ENCODE measurements at regions of chr19 and their contacts with region 1.

Region 1: DNA sequence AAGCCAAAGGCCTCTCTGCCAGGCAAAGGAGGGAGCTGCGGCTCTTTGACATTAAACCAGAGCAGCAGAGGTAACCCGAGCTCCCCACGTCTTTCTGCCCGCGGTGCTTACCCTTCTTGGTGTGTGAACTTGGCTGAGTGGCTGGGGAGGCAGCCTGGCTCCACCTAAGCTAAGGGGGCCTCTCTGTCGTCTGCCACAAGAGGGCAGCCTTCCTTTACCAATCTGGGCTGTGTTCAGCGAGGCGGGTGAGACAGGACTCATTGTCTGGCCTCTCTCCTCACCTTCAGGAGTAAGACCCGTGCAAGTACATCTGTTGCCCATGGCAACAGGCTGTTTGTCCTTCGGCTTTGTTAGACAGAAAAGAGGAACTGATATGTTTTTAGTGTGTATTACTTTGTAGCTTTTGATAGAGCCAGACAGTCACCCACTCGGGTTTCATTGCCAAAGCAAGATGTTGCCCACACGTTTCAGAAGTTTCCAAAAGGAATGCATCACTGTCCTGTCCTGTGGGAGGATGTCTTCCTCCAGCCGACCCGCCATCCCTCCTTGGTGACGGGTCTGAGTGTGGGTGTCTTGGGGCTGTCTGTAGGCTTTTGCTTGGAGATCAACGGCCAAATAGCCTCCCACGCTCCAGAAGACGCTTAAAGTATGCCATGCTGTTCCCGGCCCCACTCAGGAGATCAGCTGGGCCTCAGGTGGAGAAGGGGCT is 4.6 kb downstream of the POP4 start:
- DNase-seq: peak; percentile 61 to 85 (median 79)
- ATAC-seq: peak; percentile 82
- H3K4me3 ChIP-seq: no peak overlapping the region
- H3K4me3 Mint-ChIP-seq: peak overlapping the region in 1 of 10 donors; percentile 10
- H3K27ac ChIP-seq: peak overlapping the region; percentile 35
- H3K27ac Mint-ChIP-seq: peak overlapping the region in 8 of 9 donors; percentile 6 to 77 (median 44)
- H3K4me1 ChIP-seq: peaks cover 14 to 16% of the 10 kb centered on the region in 2 donors
- H3K4me1 Mint-ChIP-seq: peaks cover 16 to 39% (median 29%) of the 10 kb centered on the region in 7 donors
- H3K27me3 ChIP-seq: no peaks in the 10 kb centered on the region
- H3K27me3 Mint-ChIP-seq: peaks cover 0 to 4% (median 0%) of the 10 kb centered on the region in 5 donors

Region 2: GRCh38 chr19:29587518-29587986 is 23.2 kb before region 1 on chr19:
- CTCF ChIA-PET with region 1: no interaction called
- POLR2A ChIA-PET with region 1: no interaction called
- intact Hi-C with region 1: loop called in 1 of 2 experiments (anchors 1 kb)
- DNase-seq: peak in 1 of 9 donors; percentile 69
- ATAC-seq: peak; percentile 92
- H3K4me3 ChIP-seq: no peak overlapping the region
- H3K4me3 Mint-ChIP-seq: peak overlapping the region in 1 of 10 donors; percentile 32
- H3K27ac ChIP-seq: no peak overlapping the region
- H3K27ac Mint-ChIP-seq: peak overlapping the region in 3 of 9 donors; percentile 4 to 88 (median 6)
- H3K4me1 ChIP-seq: peaks cover 0 to 9% of the 10 kb centered on the region in 2 donors
- H3K4me1 Mint-ChIP-seq: peaks cover 0 to 33% (median 0%) of the 10 kb centered on the region in 7 donors
- H3K27me3 ChIP-seq: no peaks in the 10 kb centered on the region
- H3K27me3 Mint-ChIP-seq: peaks cover 22 to 45% (median 38%) of the 10 kb centered on the region in 5 donors

Region 3: DNA sequence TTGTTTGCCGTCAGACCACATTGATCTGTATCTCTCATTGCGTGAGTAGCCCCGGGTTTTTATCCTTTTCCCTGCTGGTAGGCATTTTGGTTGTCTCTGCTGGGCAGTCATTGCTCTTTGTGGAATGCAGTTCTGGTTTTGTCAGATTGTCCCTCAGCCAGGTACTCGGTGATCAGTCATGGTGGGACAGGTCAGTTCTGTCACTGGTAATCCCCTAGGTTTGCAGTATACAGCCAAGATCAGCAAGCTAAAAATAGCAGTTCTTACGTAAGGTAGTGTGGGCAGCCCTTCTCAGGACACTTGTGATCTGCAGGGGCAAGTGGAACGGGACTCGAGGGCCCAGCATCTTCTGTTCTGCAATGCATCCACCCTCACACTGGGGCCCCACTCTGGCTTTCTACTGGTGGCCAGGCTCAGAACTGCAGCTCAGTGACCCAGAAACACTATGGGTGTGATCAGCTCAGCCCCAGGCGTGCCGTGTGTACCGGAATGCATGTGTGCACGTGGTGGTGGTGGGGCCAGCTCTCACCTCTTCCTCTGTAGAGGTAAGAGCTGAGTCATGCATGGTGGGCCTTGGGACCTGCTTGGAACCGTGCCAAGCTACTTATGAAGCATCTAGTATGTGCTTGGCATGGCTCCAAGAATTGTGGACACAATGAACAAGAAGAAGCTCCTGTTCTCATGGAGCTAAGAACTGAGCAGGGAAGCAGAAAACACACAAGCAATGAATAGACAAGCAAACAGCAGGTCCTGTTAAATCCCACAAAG is 60.9 kb after region 1 on chr19:
- CTCF ChIA-PET with region 1: interaction called, 62 read pairs
- POLR2A ChIA-PET with region 1: interaction called, 87 read pairs
- intact Hi-C with region 1: loop called (anchors 1 kb)
- DNase-seq: peak in 8 of 9 donors; percentile 65 to 83 (median 76)
- ATAC-seq: peak; percentile 72
- H3K4me3 ChIP-seq: peak overlapping the region; percentile 50
- H3K4me3 Mint-ChIP-seq: peak overlapping the region; percentile 78 to 93 (median 82)
- H3K27ac ChIP-seq: peak overlapping the region; percentile 94
- H3K27ac Mint-ChIP-seq: peak overlapping the region; percentile 90 to 100 (median 98)
- H3K4me1 ChIP-seq: peaks cover 95 to 96% of the 10 kb centered on the region in 2 donors
- H3K4me1 Mint-ChIP-seq: peaks cover 60 to 96% (median 83%) of the 10 kb centered on the region in 7 donors
- H3K27me3 ChIP-seq: no peaks in the 10 kb centered on the region
- H3K27me3 Mint-ChIP-seq: no peaks in the 10 kb centered on the region

Region 4: GRCh38 chr19:29694669-29695627 is 84.2 kb after region 1 on chr19:
- CTCF ChIA-PET with region 1: interaction called, 115 read pairs
- POLR2A ChIA-PET with region 1: interaction called, 52 read pairs
- intact Hi-C with region 1: loop called (anchors 1 kb)
- DNase-seq: peak; percentile 70 to 86 (median 78)
- ATAC-seq: peak; percentile 98
- H3K4me3 ChIP-seq: no peak overlapping the region
- H3K4me3 Mint-ChIP-seq: peak overlapping the region in 2 of 10 donors; percentile 14 to 36
- H3K27ac ChIP-seq: no peak overlapping the region
- H3K27ac Mint-ChIP-seq: peak overlapping the region; percentile 63 to 87 (median 81)
- H3K4me1 ChIP-seq: peaks cover 0 to 16% of the 10 kb centered on the region in 2 donors
- H3K4me1 Mint-ChIP-seq: peaks cover 9 to 29% (median 17%) of the 10 kb centered on the region in 7 donors
- H3K27me3 ChIP-seq: no peaks in the 10 kb centered on the region
- H3K27me3 Mint-ChIP-seq: no peaks in the 10 kb centered on the region

Region 5: GRCh38 chr19:29811125-29812079 is 200.7 kb after region 1 on chr19 and contains the start of gene CCNE1:
- CTCF ChIA-PET with region 1: no interaction called
- POLR2A ChIA-PET with region 1: interaction called, 4 read pairs
- intact Hi-C with region 1: loop called in 1 of 2 experiments (anchors 1 kb)
- DNase-seq: peak; percentile 85 to 98 (median 91)
- ATAC-seq: peak; percentile 98
- H3K4me3 ChIP-seq: peak within 1 kb of the TSS; percentile 48
- H3K4me3 Mint-ChIP-seq: peak within 1 kb of the TSS; percentile 83 to 96 (median 90)
- H3K27ac ChIP-seq: peak within 1 kb of the TSS; percentile 69
- H3K27ac Mint-ChIP-seq: peak within 1 kb of the TSS; percentile 56 to 94 (median 85)
- H3K4me1 ChIP-seq: no peaks in the 10 kb centered on the region
- H3K4me1 Mint-ChIP-seq: peaks cover 0 to 36% (median 11%) of the 10 kb centered on the region in 7 donors
- H3K27me3 ChIP-seq: no peaks in the 10 kb centered on the region
- H3K27me3 Mint-ChIP-seq: no peaks in the 10 kb centered on the region
- total RNA-seq, gene CCNE1: 5.3 to 36.1 (median 6.6) TPM

Region 6: GRCh38 chr19:29941828-29942403 is 331.2 kb after region 1 on chr19 and contains the start of gene URI1:
- CTCF ChIA-PET with region 1: no interaction called
- POLR2A ChIA-PET with region 1: interaction called, 25 read pairs
- intact Hi-C with region 1: loop called (anchors 1 to 10 kb)
- DNase-seq: peak; percentile 86 to 99 (median 93)
- ATAC-seq: peak; percentile 98
- H3K4me3 ChIP-seq: peak within 1 kb of the TSS; percentile 95
- H3K4me3 Mint-ChIP-seq: peak within 1 kb of the TSS; percentile 92 to 99 (median 96)
- H3K27ac ChIP-seq: peak within 1 kb of the TSS; percentile 88
- H3K27ac Mint-ChIP-seq: peak within 1 kb of the TSS; percentile 86 to 96 (median 94)
- H3K4me1 ChIP-seq: peaks cover 27 to 35% of the 10 kb centered on the region in 2 donors
- H3K4me1 Mint-ChIP-seq: peaks cover 35 to 55% (median 47%) of the 10 kb centered on the region in 7 donors
- H3K27me3 ChIP-seq: no peaks in the 10 kb centered on the region
- H3K27me3 Mint-ChIP-seq: peaks cover 0 to 4% (median 0%) of the 10 kb centered on the region in 5 donors
- total RNA-seq, gene URI1: 55.0 to 106 (median 71.8) TPM

Measured in naive thymus-derived CD4-positive, alpha-beta T cell (primary cell).